Heart left ventricle (tissue), 16 donors: ENCODE measurements at regions of chr2 and their contacts with region 1.

Region 1: GRCh38 chr2:159706385-159706980 is 5.8 kb upstream of the MARCHF7 start:
- DNase-seq: no peak
- ATAC-seq: peak in 1 of 4 donors; percentile 44
- H3K4me3 ChIP-seq: peak overlapping the region in 4 of 12 donors; percentile 0 to 42 (median 32)
- H3K27ac ChIP-seq: peak overlapping the region in 6 of 12 donors; percentile 8 to 64 (median 28)
- H3K4me1 ChIP-seq: peaks cover 0 to 23% (median 12%) of the 10 kb centered on the region in 12 donors
- H3K27me3 ChIP-seq: no peaks in the 10 kb centered on the region
- CTCF ChIP-seq: no peak
- POLR2A ChIP-seq: no peak

Region 2: DNA sequence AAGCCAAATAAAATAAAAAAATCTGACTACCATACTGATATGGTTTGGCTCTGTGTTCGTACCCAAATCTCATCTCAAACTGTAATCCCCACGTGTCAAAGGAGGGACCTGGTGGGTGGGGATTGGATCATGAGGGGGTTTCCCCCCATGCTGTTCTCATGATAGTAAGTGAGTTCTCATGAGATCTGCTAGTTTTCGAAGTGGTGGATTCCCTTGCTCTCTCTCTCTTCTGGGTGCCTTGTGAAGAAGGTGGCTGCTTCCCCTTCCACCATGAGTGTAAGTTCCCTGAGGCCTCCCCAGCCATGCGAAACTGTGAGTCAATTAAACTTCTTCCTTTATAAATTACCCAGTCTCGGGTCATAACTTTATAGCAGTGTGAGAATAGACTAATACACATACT is 296.2 kb before region 1 on chr2:
- intact Hi-C with region 1: loop called in 1 of 10 experiments (anchors 10 kb)
- DNase-seq: no peak
- ATAC-seq: no peak
- H3K4me3 ChIP-seq: no peak overlapping the region
- H3K27ac ChIP-seq: no peak overlapping the region
- H3K4me1 ChIP-seq: no peaks in the 10 kb centered on the region
- H3K27me3 ChIP-seq: no peaks in the 10 kb centered on the region
- CTCF ChIP-seq: no peak
- POLR2A ChIP-seq: no peak

Region 3: DNA sequence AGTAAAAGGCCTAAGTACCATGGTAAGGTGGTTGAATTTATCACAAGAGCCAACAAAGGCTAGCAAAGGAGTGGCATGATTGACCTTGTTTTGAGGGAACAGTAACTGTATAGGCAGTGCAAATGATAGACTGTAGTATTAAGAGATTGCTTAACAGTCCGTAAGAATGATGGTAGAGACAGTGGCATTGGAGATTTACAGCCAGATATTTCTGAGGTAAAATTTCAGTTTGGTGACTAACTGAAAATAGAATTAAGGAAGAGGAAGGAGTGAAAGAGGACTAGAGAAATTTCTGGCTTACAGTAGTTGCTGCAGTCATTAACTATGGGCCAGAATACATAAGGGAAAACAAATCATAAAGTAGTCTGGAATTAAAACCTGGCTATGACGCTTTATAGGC is 85.7 kb before region 1 on chr2:
- intact Hi-C with region 1: loop called in 2 of 10 experiments (anchors 5 to 10 kb)
- DNase-seq: no peak
- ATAC-seq: no peak
- H3K4me3 ChIP-seq: no peak overlapping the region
- H3K27ac ChIP-seq: no peak overlapping the region
- H3K4me1 ChIP-seq: peaks cover 0 to 21% (median 11%) of the 10 kb centered on the region in 12 donors
- H3K27me3 ChIP-seq: no peaks in the 10 kb centered on the region
- CTCF ChIP-seq: no peak
- POLR2A ChIP-seq: no peak

Region 4: DNA sequence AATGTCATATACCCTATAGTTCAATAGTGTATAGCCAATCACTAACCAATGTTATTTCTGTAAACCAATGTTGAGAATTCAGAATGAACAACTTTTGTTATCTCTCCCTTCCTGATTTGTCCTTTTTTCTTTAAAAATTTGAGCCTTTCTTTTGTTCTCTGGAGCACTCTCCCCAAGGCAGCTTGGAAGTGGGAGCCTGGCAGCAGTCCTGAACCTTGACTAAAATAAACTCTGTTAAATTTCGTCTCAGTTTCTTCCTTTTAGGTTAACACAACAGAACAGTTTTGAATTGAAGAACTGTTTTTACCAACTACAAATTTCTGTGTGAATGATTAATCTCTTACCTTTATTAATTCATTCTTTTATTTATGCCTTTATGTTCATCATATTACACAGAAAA is 55.6 kb after region 1 on chr2:
- intact Hi-C with region 1: no loop called
- DNase-seq: no peak
- ATAC-seq: no peak
- H3K4me3 ChIP-seq: no peak overlapping the region
- H3K27ac ChIP-seq: no peak overlapping the region
- H3K4me1 ChIP-seq: peaks cover 0 to 34% (median 10%) of the 10 kb centered on the region in 12 donors
- H3K27me3 ChIP-seq: no peaks in the 10 kb centered on the region
- CTCF ChIP-seq: no peak
- POLR2A ChIP-seq: no peak